ACHN (cell line): ENCODE measurements at regions of chr3 and their contacts with region 1.

Region 1: GRCh38 chr3:135918580-135918962 is 47.0 kb upstream of the PPP2R3A start:
- DNase-seq: peak; percentile 55

Region 2: GRCh38 chr3:135719449-135719848 is 199.1 kb before region 1 on chr3:
- in situ Hi-C with region 1: no loop called
- DNase-seq: no peak

Region 3: DNA sequence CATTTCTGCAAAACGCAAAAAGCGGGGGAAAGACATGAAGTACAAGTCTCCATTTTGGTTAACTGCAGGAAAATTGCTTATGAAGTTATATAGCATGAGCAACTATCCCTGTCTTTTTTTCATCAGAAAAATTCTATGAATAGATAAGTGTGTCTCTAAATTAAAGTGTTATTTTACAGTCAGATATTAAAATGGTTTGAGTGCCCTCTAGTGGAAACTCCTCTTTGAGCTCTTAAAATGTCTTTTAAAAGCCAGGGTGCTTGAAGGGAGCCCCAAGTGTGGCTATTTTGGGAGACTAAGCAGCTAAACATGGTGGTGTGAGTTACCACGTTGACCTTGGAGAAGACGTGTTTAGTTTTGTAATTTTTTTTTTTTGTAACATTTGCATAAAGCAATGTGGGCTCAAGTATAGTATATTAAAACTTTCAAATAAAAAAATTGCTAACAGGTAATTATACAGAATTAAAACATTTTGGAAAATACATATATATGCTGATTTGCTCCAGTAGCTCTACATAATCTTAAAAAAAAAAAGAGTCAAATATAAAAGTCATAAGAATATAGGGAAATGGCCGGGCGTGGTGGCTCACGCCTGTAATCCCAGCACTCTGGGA is 124.1 kb after region 1 on chr3:
- in situ Hi-C with region 1: loop called (anchors 25 kb)
- DNase-seq: peak; percentile 60

Region 4: GRCh38 chr3:136209921-136210320 is 291.4 kb after region 1 on chr3:
- in situ Hi-C with region 1: no loop called
- DNase-seq: peak; percentile 57